ENCODE measurements at regions of chr7 and their contacts with region 1.

Region 1: DNA sequence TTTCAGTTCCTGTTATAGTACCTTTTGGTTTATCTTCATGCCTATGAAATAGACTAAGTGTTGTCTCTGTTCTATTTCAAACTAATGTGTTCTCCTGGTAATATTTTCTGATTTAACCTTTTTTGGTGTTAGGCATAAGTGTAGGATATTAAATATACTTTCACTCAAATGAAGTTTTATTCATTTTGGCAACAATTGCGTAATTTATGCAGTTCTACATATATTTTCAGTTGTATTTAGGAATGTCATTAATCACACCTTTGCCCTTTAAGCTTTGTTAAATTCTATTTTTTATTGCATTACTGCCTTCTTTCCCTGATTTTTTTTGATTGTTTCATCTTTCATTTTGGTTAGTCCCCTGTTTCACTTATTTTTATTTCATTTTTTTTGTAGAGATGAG is 47.3 kb downstream of the RSBN1L start:
- DNase-seq: no peak
- ATAC-seq: no peak
- H3K4me3 Mint-ChIP-seq: no peak overlapping the region
- H3K27ac Mint-ChIP-seq: no peak overlapping the region
- H3K4me1 Mint-ChIP-seq: peaks cover 5% of the 10 kb centered on the region
- H3K27me3 Mint-ChIP-seq: no peaks in the 10 kb centered on the region
- CTCF ChIP-seq: no peak

Region 2: DNA sequence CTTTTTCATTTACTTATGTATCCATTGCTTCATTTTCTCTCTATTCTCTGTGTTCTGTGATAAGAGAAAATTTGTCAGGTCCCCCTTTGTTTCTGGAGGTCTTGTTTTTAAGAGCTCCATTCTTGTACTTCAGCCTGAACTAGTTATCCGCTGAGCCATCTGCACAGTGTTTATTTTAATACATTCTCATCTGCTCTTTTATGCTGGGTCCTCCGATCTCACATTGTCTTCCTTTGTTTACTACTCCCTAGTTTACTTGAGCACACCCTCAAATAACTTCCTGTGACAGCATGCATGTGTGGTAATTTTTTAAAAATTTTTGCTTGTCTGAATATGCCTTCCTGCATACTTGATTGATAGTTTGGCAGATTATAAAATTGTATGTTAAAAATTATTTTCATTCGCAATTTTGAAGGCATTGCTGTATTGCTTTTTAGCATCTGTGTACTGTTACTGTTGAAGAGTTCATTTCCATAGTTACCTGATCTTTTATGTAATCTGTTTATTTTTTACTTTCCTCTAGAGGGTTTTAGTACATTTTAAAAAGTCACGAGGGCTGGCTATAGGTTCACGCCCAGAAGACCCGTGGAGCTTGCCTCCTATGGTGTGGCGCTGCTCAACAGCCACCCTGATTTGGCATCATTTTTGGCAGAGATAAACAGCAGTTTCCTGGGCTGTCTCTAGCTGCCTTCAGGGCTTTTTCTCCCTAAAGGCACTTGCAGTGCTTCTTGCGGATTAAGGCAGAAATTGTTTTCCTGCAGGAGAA is 15.4 kb before region 1 on chr7:
- CTCF ChIA-PET with region 1: no interaction called
- POLR2A ChIA-PET with region 1: no interaction called
- intact Hi-C with region 1: loop called (anchors 2 kb)
- DNase-seq: no peak
- ATAC-seq: no peak
- H3K4me3 Mint-ChIP-seq: peak overlapping the region; percentile 11
- H3K27ac Mint-ChIP-seq: peak overlapping the region; percentile 50
- H3K4me1 Mint-ChIP-seq: peaks cover 48% of the 10 kb centered on the region
- H3K27me3 Mint-ChIP-seq: no peaks in the 10 kb centered on the region
- CTCF ChIP-seq: no peak